ENCODE measurements at regions of chr14 and their contacts with region 1.

Region 1: GRCh38 chr14:23910101-23910875 is 43.3 kb upstream of the DHRS4 start:
- DNase-seq: peak; percentile 50
- CTCF ChIP-seq: peak; percentile 72

Region 2: GRCh38 chr14:23578560-23579310 is 331.6 kb before region 1 on chr14 and contains the start of gene JPH4:
- CTCF ChIA-PET with region 1: interaction called, 15 read pairs
- POLR2A ChIA-PET with region 1: no interaction called
- DNase-seq: no peak
- CTCF ChIP-seq: no peak

Region 3: GRCh38 chr14:23605931-23606585 is 304.2 kb before region 1 on chr14:
- CTCF ChIA-PET with region 1: interaction called, 10 read pairs
- POLR2A ChIA-PET with region 1: no interaction called
- DNase-seq: peak; percentile 76
- CTCF ChIP-seq: no peak

Region 4: DNA sequence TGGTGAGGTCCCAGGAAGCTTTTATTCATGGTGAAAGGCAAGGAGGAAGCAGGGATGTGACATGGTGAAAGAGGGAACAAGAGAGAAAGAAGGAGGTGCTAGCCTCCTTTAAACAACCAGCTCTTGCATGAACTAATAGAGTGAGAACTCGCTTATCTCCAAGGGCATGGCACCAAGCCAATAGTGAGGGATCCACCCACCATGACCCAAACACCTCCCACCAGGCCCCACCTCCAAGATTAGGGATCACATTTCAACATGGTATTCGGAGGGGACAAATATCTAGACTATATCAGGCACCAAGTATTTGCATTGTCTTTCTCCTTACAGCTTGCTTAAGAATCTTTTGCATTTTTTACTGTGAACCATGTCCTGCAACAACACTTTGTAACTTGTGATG is 48.6 kb before region 1 on chr14:
- CTCF ChIA-PET with region 1: no interaction called
- POLR2A ChIA-PET with region 1: no interaction called
- DNase-seq: no peak
- CTCF ChIP-seq: no peak

Region 5: GRCh38 chr14:23881282-23881681 is 29.0 kb before region 1 on chr14:
- CTCF ChIA-PET with region 1: interaction called, 11 read pairs
- POLR2A ChIA-PET with region 1: no interaction called
- DNase-seq: no peak
- CTCF ChIP-seq: no peak

Region 6: GRCh38 chr14:23929822-23930294 is 19.6 kb after region 1 on chr14:
- CTCF ChIA-PET with region 1: interaction called, 22 read pairs
- POLR2A ChIA-PET with region 1: no interaction called
- DNase-seq: peak; percentile 81
- CTCF ChIP-seq: peak; percentile 81

Region 7: DNA sequence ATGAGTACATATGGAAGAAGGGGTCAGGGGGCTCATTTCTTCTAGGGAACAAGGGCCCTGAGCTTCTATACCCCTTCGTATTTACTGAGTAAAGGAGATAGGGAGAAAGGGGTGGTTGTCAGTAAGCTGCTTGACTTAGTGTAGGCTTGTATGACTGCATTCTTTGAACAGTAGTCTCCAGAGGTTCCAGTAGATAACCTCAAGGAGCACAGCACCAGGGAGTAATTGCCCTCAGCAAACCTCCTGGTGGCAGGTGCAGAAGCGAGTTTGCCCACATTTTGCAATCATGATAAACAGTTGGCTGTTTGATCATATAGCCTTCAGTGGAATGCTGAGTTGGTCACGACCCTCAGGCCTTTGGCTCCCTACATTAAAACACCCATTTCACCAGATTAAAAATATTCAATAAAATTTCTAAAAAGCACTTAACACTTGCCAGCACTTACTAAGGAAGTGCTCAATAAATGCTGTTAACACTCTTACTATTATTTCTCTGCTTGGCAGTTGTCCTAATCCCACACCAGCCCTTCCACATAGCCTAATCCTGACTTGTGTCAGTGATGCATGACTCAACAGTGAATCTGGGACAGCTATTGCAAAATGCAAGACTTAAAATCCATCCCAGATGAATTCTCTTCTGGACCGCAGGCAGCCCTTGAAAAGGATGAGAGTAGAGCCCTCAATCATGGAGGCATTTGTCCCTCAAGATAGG is 74.8 kb after region 1 on chr14:
- CTCF ChIA-PET with region 1: no interaction called
- POLR2A ChIA-PET with region 1: no interaction called
- DNase-seq: no peak
- CTCF ChIP-seq: no peak

Measured in GM10248 (cell line).